WTC11 (cell line): ENCODE measurements at regions of chr10 and their contacts with region 1.

Region 1: GRCh38 chr10:76311752-76312636 is 880.6 kb downstream of the LRMDA start:
- DNase-seq: peak; percentile 63
- ATAC-seq: peak; percentile 99
- H3K4me3 Mint-ChIP-seq: no peak overlapping the region
- H3K27ac Mint-ChIP-seq: no peak overlapping the region
- H3K4me1 Mint-ChIP-seq: peaks cover 19% of the 10 kb centered on the region
- H3K27me3 Mint-ChIP-seq: no peaks in the 10 kb centered on the region
- CTCF ChIP-seq: peak; percentile 60

Region 2: DNA sequence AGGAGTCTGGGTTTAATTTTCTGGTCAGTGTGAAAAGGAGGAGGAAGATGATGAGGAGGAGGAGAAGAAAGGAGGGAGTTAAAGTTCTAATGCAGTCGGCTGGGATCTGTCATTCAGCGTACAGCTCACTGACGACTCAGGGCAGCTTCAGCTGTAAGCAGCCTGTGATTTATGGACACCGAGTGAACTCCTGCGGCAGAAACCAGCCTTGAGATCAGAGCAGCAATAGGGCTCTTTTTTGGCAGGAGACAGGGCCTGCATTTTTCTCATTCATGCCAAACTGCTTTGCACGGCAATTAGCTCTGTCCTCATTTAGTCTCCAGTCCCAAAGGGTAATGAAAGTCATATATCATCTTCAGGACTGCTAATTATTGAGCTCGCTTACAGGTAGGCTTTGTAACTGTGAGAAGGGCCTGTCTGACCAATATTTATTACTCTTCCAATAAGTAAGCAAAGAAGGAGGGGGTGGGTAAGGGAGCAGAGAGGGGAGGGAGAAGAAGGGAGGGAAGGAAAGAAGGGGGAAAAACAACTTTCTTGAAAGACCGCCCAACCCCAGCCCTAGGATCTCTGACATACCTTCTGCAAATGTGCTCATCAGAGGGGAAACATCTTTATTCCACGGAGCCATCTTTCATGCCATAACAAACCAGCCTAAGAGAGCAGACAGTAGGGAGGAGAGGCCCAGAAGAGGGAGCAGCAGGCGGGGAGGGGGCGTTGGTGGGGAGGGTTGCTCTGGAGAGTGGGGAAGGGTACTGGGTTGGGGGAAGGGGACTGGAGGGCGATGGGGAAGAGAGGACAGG is 1028.1 kb before region 1 on chr10:
- CTCF ChIA-PET with region 1: no interaction called
- POLR2A ChIA-PET with region 1: interaction called, 12 read pairs
- DNase-seq: no peak
- ATAC-seq: peak; percentile 18
- H3K4me3 Mint-ChIP-seq: peak overlapping the region; percentile 74
- H3K27ac Mint-ChIP-seq: no peak overlapping the region
- H3K4me1 Mint-ChIP-seq: peaks cover 14% of the 10 kb centered on the region
- H3K27me3 Mint-ChIP-seq: peaks cover 51% of the 10 kb centered on the region
- CTCF ChIP-seq: no peak

Region 3: DNA sequence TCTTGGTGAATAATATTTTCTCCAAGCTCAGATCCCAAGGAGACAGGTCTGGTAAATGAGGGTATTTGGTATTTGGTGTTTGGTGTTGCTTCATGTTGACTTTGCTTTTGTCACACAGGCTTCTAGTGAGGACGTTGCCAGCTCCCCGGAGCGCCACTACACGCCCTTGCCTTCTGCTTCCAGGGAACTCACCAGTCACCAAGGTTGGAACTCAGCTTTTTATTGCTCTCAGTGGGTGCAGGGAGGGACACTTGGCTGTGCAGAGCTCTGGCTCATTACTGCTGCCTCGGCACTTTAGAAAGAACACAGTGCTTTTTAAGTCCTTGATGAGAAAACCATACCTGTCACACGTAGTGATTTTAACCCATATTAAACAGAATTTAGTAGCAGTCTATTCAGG is 12.3 kb after region 1 on chr10:
- CTCF ChIA-PET with region 1: interaction called, 10 read pairs
- POLR2A ChIA-PET with region 1: no interaction called
- DNase-seq: no peak
- ATAC-seq: no peak
- H3K4me3 Mint-ChIP-seq: no peak overlapping the region
- H3K27ac Mint-ChIP-seq: no peak overlapping the region
- H3K4me1 Mint-ChIP-seq: no peaks in the 10 kb centered on the region
- H3K27me3 Mint-ChIP-seq: no peaks in the 10 kb centered on the region
- CTCF ChIP-seq: no peak

Region 4: GRCh38 chr10:76428551-76429367 is 116.8 kb after region 1 on chr10:
- CTCF ChIA-PET with region 1: no interaction called
- POLR2A ChIA-PET with region 1: no interaction called
- DNase-seq: no peak
- ATAC-seq: no peak
- H3K4me3 Mint-ChIP-seq: no peak overlapping the region
- H3K27ac Mint-ChIP-seq: no peak overlapping the region
- H3K4me1 Mint-ChIP-seq: peaks cover 54% of the 10 kb centered on the region
- H3K27me3 Mint-ChIP-seq: no peaks in the 10 kb centered on the region
- CTCF ChIP-seq: no peak